ENCODE measurements at regions of chr2 and their contacts with region 1.

Region 1: DNA sequence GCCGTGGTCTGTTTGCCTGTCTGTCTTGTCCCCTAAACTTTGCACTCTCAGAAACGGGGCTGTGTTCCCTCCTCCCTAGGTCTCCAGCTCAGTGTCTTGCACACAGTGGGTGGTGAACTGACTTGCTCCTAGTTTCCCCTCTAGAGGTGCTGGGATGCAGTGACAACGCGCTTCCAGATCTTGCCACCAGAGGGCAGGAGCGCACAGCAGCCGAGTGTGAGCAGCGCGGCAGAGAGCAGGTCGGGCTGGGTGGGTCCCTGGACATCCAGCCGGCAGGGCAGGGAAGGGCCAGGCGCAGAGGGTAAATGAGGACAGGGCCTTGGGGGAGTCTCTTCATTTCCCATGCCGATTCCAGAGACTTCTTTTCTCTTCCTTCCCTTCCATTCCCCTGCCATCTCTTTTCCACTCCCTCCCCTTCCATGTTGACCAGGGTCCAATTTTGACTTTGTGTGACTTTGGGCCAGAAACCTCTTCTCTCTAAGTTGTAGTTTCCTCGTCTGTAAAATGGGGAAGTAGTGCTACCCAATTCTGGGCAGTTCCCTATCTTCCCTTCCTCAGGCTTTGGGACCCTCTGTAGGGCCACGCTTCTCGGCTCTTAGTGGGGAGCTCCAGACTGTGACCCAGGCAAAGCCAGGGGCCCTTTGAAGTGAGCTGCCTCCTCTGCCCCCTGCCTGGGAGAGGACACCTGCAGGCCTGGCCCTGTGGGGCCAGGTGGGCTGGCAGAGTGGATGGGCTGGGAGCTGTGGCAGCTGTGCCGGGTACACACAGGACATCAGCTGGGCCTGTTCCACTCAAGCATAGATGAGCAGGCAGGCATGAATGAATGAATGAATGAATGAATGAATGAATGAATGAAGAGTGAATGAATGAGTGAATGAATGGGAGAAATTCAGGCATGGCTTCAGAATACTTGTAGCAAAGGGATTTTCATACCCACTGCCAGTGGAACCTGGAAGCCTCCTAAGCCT is 43.3 kb upstream of the TAF1B start:
- DNase-seq: peak; percentile 93
- ATAC-seq: peak; percentile 92
- H3K4me3 Mint-ChIP-seq: peak overlapping the region; percentile 57
- H3K27ac Mint-ChIP-seq: peak overlapping the region; percentile 91
- H3K4me1 Mint-ChIP-seq: peaks cover 44% of the 10 kb centered on the region
- H3K27me3 Mint-ChIP-seq: peaks cover 8% of the 10 kb centered on the region

Region 2: DNA sequence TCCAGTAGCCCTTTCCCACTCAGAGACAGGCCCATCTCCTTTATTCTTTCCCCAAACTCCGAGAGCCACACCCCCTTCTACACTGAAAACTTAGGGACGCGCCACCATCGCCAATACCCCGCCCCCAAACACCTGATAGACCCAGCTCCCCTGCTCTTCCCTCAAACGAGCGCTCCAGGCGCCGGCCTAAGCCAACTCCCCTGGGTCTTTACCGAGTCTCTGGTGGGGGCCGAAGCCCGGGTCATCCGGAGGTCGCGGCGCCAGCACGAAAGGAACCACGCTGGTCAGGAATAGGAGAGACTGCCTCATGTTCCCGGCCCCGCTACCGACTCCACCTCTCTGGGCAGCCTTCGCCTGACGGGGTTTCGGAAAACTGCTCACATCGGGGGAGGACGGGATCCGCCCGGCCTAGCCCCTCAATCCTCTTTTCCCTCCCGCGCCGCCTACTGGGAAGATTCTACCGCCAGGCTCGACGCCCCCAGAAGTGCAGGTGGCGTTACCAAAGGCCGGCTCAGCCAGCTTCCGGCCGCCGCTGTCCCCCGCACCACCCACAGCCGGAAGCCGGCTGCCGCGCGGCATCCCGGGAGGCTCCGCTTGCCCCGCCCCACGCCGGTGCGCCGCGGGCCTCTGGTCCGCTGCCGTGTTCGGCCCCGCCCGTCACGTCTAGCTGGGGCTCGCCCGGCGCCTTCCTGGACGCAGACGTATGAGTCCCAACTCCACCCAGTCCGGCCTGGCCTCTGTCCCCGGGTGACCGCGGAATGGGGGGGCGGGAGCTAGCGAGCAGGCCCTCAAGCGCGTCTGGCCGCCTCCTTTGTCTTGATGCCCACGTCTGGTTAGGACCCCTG is 244.4 kb before region 1 on chr2 and contains the start of gene ADAM17:
- CTCF ChIA-PET with region 1: interaction called, 10 read pairs
- DNase-seq: peak; percentile 93
- ATAC-seq: peak; percentile 93
- H3K4me3 Mint-ChIP-seq: peak within 1 kb of the TSS; percentile 97
- H3K27ac Mint-ChIP-seq: peak within 1 kb of the TSS; percentile 97
- H3K4me1 Mint-ChIP-seq: peaks cover 65% of the 10 kb centered on the region
- H3K27me3 Mint-ChIP-seq: no peaks in the 10 kb centered on the region
- total RNA-seq, gene ADAM17: 20.0 to 25.5 TPM

Region 3: DNA sequence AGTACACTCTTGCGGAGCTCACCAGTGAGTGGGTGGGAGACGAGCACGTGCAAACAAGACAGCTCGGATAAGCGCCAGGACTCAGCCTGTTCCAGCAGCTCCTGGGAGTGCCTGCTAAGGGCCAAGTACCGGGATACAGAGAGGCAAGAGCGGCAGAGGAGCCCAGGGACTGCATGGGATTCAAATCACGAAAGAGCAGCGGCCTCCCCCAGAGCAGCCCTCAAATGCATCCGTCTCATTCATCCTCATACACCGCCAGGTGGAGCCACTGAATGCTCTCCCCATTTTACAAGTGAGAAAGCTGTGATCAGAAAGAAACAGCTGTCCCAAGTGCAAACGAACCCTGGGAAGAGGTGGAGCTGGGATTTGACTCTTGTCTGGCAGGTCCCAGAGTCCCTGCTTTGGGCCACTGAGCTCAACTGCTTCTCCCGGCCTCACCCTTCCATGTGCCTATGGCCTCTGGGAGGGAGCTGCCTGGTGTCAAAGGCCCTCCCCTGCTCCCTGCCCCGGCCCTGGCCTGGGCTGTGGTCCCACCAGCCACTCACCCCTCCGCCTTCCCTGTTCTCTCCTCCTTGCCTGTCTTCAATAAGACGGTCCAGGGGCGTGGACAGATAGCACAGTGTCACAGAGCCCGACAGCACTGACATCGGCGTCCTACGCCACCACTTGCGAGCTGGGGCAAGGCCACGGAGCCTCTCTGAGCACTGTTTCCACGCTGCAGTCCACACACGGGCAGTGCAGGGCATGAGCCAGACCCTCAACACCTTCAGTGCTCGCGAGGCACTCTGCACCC is 29.4 kb before region 1 on chr2:
- CTCF ChIA-PET with region 1: interaction called, 63 read pairs
- DNase-seq: peak; percentile 78
- ATAC-seq: peak; percentile 78
- H3K4me3 Mint-ChIP-seq: no peak overlapping the region
- H3K27ac Mint-ChIP-seq: peak overlapping the region; percentile 15
- H3K4me1 Mint-ChIP-seq: peaks cover 18% of the 10 kb centered on the region
- H3K27me3 Mint-ChIP-seq: no peaks in the 10 kb centered on the region

Region 4: GRCh38 chr2:9789371-9789968 is 10.5 kb before region 1 on chr2:
- CTCF ChIA-PET with region 1: interaction called, 38 read pairs
- DNase-seq: no peak
- ATAC-seq: no peak
- H3K4me3 Mint-ChIP-seq: no peak overlapping the region
- H3K27ac Mint-ChIP-seq: no peak overlapping the region
- H3K4me1 Mint-ChIP-seq: peaks cover 14% of the 10 kb centered on the region
- H3K27me3 Mint-ChIP-seq: peaks cover 3% of the 10 kb centered on the region

Region 5: GRCh38 chr2:10043906-10044601 is 244.1 kb after region 1 on chr2:
- CTCF ChIA-PET with region 1: interaction called, 26 read pairs
- DNase-seq: peak; percentile 96
- ATAC-seq: peak; percentile 73
- H3K4me3 Mint-ChIP-seq: peak overlapping the region; percentile 68
- H3K27ac Mint-ChIP-seq: peak overlapping the region; percentile 79
- H3K4me1 Mint-ChIP-seq: peaks cover 13% of the 10 kb centered on the region
- H3K27me3 Mint-ChIP-seq: peaks cover 21% of the 10 kb centered on the region

Measured in activated CD8-positive, alpha-beta memory T cell treated with anti-CD3 and anti-CD28 coated beads, Interleukin-2, amount 10 ng/mL, durations not matched to agents 7 days and 5 days (primary cell).